ENCODE measurements at regions of chr6 and their contacts with region 1.

Region 1: DNA sequence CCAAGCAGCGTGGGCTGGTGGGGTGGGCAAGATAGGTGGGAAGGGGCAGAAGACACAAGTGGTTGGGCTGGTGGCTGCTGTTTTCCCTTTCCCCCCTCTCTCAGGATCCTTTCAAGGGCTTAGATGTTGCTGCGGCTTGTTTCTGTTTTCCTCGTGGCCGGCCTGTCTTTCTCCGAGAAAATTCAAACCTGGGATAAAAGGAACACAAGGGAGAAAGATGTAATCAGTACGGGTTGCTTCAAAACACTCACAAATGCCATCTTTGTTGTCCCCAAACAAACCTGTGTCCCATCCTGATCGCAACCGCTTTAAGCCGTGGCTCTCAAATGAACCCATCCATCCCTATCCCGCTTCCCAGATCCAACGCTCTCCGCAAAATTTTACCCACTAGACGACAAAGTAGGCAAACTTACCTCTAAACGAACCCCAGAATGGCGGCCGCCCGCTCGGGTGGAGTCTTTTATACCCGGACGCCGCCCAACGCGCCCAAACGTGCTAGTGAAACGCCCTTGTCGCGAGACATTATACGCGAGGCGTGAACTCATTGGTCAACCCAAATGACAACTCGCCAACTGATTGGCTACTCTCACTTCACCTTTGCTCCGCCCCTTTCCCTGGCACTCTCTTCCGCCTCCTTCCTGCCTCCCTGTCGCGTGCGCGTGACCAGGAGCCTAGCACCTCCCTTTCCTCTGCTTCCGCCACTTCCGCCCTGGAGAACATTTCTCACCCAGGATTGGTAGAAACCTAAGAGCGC is at the start of gene PPP1R10:
- DNase-seq: peak; percentile 100
- ATAC-seq: peak; percentile 83
- H3K4me3 ChIP-seq: peak within 1 kb of the TSS; percentile 87 to 97 (median 89)
- H3K27ac ChIP-seq: peak within 1 kb of the TSS; percentile 98
- H3K4me1 ChIP-seq: peaks cover 35% of the 10 kb centered on the region
- H3K27me3 ChIP-seq: no peaks in the 10 kb centered on the region; a peak in 1 of 5 replicates
- CTCF ChIP-seq: no peak
- EP300 ChIP-seq: no peak; a peak in 1 of 4 replicates
- POLR2A ChIP-seq: peak; percentile 98 to 100
- RAD21 ChIP-seq: no peak; the same call in 1 of the 2 replicates
- total RNA-seq, gene PPP1R10: 19.5 and 38.4 TPM in 2 replicates

Region 2: DNA sequence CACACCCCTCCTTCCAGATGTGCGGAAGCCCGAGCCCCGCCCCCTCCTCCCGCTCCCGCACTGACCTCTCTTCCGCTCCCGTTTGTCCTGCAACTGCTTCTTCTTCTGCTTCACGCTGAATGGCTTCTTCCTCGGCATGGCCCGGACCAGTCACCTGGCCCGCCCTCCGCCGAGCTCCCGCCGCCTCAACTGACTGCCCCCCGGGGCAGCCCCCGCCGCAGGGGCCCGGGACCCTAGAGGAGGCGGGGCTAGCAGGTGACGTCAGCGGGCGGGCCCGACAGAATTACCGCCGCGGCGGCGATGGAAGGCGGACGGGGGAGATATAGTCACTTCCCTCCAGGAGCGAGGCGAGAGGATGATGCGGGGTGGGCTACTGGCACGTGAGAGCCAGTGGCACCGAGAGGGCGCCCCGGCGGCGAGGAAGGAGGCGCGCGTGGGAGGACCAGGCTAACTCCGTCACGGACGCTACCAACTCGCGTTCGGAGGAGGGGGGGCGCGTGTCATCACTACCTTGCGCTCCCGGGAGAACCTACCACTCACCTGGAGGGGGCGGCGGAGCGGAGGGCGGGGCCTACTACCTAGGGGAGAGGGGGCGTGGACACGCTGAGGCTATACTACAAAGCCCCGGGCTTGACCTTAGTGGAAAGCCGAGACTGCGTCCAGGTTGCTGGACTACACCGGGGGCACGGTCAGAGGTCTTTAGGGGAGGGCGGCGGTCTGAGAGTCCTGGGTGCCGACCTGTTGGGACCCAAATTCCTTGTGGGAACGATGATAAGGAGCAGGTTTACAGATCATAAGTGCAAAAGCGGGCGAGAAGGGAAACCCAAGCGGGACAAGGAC is 60.7 kb before region 1 on chr6 and contains the start of gene GNL1:
- CTCF ChIA-PET with region 1: no interaction called
- POLR2A ChIA-PET with region 1: interaction called, 26 read pairs
- in situ Hi-C with region 1: no loop called
- intact Hi-C with region 1: no loop called
- DNase-seq: peak; percentile 94
- ATAC-seq: peak; percentile 85
- H3K4me3 ChIP-seq: peak within 1 kb of the TSS; percentile 87 to 93 (median 90)
- H3K27ac ChIP-seq: peak within 1 kb of the TSS; percentile 94
- H3K4me1 ChIP-seq: peaks cover 26% of the 10 kb centered on the region
- H3K27me3 ChIP-seq: no peaks in the 10 kb centered on the region; a peak in 1 of 5 replicates
- CTCF ChIP-seq: no peak
- EP300 ChIP-seq: peak in 1 of 2 experiments; percentile 49; a peak in 2 of 4 replicates
- POLR2A ChIP-seq: peak; percentile 82 to 85; a peak in 3 of 4 replicates
- RAD21 ChIP-seq: peak; percentile 44; the same call in 1 of the 2 replicates
- total RNA-seq, gene GNL1: 54.8 and 55.6 TPM in 2 replicates

Region 3: GRCh38 chr6:30590994-30591393 is 26.0 kb before region 1 on chr6:
- CTCF ChIA-PET with region 1: no interaction called
- POLR2A ChIA-PET with region 1: interaction called, 172 read pairs
- in situ Hi-C with region 1: no loop called
- intact Hi-C with region 1: no loop called
- DNase-seq: no peak
- ATAC-seq: no peak
- H3K4me3 ChIP-seq: no peak overlapping the region
- H3K27ac ChIP-seq: no peak overlapping the region
- H3K4me1 ChIP-seq: no peaks in the 10 kb centered on the region
- H3K27me3 ChIP-seq: no peaks in the 10 kb centered on the region
- CTCF ChIP-seq: no peak
- EP300 ChIP-seq: no peak
- POLR2A ChIP-seq: no peak
- RAD21 ChIP-seq: no peak

Region 4: DNA sequence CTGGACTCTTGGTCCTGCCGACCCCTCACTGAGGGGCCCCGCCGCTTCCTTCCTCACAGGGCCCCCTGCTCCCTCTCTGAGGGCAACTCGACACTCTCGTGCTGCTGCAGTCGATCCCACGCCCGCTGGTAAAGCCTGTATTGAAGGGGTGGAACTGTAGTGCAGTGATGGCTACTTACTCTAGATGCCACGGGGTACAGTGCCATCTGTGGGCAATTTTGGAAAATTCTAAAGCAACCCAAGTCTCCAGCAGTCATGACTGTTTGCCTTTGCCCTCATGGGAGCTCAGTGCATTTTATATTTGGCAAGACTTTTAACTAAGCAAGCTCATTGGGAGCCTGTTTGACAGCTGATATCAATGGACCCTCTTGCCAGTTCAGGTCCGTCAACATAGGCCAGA is 23.5 kb after region 1 on chr6:
- CTCF ChIA-PET with region 1: no interaction called
- POLR2A ChIA-PET with region 1: interaction called, 16 read pairs
- in situ Hi-C with region 1: no loop called
- intact Hi-C with region 1: no loop called
- DNase-seq: no peak
- ATAC-seq: no peak
- H3K4me3 ChIP-seq: no peak overlapping the region
- H3K27ac ChIP-seq: no peak overlapping the region
- H3K4me1 ChIP-seq: peaks cover 32% of the 10 kb centered on the region
- H3K27me3 ChIP-seq: no peaks in the 10 kb centered on the region
- CTCF ChIP-seq: no peak
- EP300 ChIP-seq: no peak
- POLR2A ChIP-seq: no peak
- RAD21 ChIP-seq: no peak

Region 5: DNA sequence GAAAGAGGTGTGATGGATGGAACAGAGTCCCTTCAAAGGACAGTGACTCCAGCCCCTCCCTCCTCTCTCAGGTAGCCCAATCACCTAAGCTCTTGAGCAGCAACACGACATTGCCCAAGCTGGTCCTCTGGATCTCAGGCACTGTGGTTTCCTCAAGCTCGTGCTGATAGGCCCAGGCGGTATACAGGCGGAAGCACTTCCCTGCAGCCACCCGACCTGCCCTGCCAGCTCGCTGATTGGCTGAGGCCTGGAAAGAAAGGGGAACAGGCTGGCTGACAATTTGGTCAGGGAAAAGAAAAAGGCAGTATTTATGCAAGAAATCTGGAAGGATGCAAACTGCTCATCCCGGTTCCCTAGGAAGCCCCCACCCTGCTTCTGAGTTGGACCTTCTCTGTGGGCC is 39.5 kb after region 1 on chr6:
- CTCF ChIA-PET with region 1: no interaction called
- POLR2A ChIA-PET with region 1: interaction called, 36 read pairs
- in situ Hi-C with region 1: no loop called
- intact Hi-C with region 1: loop called (anchors 5 kb)
- DNase-seq: no peak
- ATAC-seq: no peak
- H3K4me3 ChIP-seq: no peak overlapping the region
- H3K27ac ChIP-seq: peak overlapping the region; percentile 80
- H3K4me1 ChIP-seq: peaks cover 53% of the 10 kb centered on the region
- H3K27me3 ChIP-seq: no peaks in the 10 kb centered on the region
- CTCF ChIP-seq: no peak
- EP300 ChIP-seq: no peak
- POLR2A ChIP-seq: no peak
- RAD21 ChIP-seq: no peak

Region 6: DNA sequence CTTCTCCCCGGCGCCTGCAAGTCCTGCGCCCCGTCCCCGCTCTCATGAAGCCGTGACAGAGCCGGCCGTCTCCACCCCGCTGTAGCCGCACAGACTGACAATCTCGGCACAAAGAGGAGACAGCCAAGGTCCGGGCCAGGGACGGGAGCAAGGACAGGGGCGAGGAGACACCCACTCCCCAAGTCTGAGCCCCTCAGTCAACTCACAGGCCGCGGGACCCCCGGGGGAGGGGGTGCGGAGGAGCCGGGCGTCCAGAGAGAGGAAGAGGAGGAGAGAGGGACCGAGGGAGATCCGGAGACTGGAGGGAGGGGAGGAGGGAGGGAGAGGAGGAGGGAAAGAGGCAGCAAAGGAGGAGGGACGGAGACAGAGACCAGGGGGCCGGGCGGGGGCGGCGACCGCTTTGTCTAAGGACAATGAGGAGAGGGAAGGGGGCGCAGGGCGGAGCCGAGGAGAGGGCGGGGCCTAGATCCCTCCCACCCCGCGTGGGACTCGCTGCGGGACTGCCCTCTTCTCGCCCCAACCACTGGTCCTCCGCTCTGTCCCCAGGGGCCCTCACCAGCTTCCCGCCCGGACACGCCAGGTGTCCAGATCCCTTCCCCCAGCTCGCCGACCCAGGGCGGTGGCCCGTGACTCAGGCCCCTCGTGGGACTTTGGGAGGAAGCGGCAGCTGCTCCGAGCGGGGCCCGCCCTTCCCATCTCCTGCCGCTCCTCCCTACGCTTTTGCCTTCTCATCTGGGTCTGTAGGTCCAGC is 70.1 kb after region 1 on chr6:
- CTCF ChIA-PET with region 1: no interaction called
- POLR2A ChIA-PET with region 1: interaction called, 20 read pairs
- in situ Hi-C with region 1: no loop called
- intact Hi-C with region 1: no loop called
- DNase-seq: peak; percentile 49
- ATAC-seq: peak; percentile 50
- H3K4me3 ChIP-seq: peak overlapping the region; percentile 77 to 84 (median 81)
- H3K27ac ChIP-seq: peak overlapping the region; percentile 43
- H3K4me1 ChIP-seq: peaks cover 79% of the 10 kb centered on the region
- H3K27me3 ChIP-seq: no peaks in the 10 kb centered on the region
- CTCF ChIP-seq: peak; percentile 6; the same call in 1 of the 2 replicates
- EP300 ChIP-seq: peak in 1 of 2 experiments; percentile 55; a peak in 1 of 4 replicates
- POLR2A ChIP-seq: peak in 1 of 2 experiments; percentile 67; a peak in 3 of 4 replicates
- RAD21 ChIP-seq: no peak

Measured in HepG2 (cell line).